PC-3 (cell line): ENCODE measurements at regions of chr19 and their contacts with region 1.

Region 1: DNA sequence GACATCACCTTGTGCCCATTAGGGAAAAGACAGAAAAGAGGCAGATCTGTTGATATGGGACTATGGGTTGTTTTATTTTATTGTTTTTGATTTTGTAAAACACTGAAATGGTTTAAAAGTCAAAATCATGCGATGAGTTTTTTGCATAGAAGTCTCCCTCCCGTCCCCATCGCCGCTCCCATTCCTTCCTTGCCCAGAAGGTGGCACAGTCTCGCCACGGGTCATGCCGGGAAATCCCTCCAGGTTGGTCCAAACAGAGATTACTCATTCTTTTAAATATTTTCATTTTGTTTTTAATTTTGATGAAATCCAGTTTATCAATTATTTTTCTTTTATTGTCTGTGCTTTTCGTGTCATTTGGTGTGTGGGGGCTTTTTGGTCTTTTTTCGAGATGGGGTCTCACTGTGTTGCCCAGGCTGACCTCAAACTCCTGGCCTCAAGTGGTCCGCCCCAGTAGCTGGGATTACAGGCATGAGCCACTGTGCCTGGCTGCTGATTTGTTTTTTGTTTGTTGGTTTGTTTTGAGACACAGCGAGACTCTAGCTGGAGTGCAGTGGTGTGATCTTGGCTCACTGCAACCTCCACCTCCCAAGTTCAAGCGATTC is 9.2 kb downstream of the PGPEP1 start:
- DNase-seq: peak; percentile 79
- ATAC-seq: peak; percentile 84
- H3K4me3 ChIP-seq: no peak overlapping the region
- H3K27ac ChIP-seq: no peak overlapping the region
- H3K4me1 ChIP-seq: no peaks in the 10 kb centered on the region
- H3K27me3 ChIP-seq: no peaks in the 10 kb centered on the region
- CTCF ChIP-seq: peak; percentile 92

Region 2: GRCh38 chr19:18408053-18408476 is 58.4 kb after region 1 on chr19:
- CTCF ChIA-PET with region 1: interaction called, 3 read pairs
- POLR2A ChIA-PET with region 1: no interaction called
- intact Hi-C with region 1: loop called (anchors 1 kb)
- DNase-seq: peak; percentile 41
- ATAC-seq: no peak
- H3K4me3 ChIP-seq: no peak overlapping the region
- H3K27ac ChIP-seq: no peak overlapping the region
- H3K4me1 ChIP-seq: no peaks in the 10 kb centered on the region
- H3K27me3 ChIP-seq: no peaks in the 10 kb centered on the region
- CTCF ChIP-seq: peak; percentile 62